KBM-7 (cell line): ENCODE measurements at regions of chr14 and their contacts with region 1.

Region 1: DNA sequence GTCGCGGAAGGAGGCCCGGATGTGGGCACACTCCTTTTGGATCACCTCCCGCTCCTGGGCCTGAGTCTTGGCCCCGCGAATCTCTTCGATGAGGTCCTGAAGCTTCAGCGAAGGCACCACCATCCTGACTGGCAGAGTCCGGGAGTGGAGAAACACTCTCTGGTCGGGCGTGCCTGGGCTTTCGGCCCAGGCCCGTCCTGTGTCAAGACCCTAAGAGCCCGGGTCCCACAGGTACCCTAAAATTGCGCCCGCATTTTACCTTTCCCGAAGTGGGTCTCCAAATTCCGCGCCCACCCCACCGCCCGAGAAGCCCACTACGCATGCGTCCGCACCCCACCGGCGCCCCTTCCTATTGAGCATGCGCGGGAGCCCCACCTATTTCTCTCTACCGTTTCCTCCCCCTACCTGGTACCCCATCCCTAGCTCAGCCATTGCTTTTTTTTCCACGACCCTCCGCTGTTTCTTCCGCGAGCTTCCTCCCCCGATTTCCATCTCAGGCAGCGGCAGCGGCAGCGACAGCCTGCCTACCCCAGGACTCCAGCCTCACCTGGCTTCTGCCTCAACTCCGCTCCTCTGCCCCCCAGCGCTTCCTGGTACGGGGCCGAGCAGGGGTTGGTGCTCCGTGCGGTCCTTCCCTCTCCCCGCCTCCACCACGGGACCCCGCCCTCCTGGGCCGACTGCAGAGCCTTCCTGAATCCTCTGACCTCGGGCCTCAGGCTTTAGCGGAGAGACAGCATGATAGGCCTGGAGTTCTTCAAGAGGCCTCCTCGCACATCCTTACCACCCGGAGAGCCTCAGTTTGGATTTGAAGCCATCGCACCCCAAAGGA is at the start of gene AP1G2:
- DNase-seq: peak; percentile 92

Region 2: DNA sequence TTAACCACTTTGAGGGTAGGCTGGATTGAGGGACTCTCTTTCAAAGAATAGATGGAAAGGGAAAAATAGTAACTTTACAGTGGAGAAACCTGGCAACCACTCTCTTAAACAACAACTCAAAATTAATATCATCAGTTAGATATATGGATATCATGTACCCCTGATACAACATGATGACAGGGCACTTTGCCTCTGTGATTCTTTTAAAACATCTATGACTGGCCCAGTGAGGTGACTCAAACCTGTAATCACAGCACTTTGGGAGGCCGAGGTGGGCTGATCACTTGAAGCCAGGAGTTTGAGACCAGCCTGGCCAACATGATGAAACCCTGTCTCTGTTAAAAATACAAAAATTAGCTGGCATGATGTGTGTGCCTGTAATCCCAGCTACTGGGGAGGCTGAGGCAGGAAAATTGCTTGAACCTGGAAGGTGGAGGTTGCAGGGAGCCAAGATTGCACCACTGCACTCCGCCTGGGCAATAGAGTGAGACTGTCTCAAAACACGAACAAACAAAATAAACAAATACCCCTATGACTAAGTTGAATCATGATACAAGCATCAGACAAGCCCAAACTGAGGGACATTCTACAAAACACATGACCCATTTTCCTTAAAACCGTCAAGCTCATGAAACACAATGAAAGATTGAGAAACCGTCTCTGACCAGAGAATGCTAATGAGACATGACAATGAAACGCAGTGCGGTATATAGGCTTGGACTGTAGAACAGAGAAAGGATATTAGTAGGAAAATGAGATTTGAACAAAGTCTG is 357.6 kb before region 1 on chr14:
- in situ Hi-C with region 1: no loop called
- DNase-seq: no peak

Region 3: GRCh38 chr14:23478111-23478759 is 89.2 kb before region 1 on chr14:
- in situ Hi-C with region 1: loop called (anchors 10 kb)
- DNase-seq: peak; percentile 71

Region 4: GRCh38 chr14:23494223-23494622 is 73.2 kb before region 1 on chr14:
- in situ Hi-C with region 1: no loop called
- DNase-seq: no peak